HepG2 (cell line): ENCODE measurements at regions of chr22 and their contacts with region 1.

Region 1: DNA sequence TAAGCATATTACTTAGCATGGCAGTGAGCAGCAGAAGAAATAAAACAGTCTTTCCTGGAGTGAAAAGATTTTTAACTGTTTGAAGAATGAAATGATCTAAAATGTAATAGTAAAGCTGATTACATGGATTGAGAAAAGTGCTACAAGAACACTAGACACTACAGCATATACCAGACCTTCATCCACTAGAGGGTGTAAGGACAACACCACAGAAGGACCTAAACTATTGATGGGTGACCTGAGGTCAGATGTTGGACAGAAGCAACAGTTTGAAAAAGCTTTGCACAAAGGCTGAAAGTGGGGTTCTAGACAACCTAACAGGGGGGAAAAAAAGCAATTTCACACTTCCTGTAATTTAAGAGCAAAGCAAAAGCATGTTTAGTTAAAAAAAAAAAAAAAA is 97.7 kb downstream of the RBFOX2 start:
- DNase-seq: peak; percentile 78
- ATAC-seq: peak; percentile 90
- H3K4me3 ChIP-seq: no peak overlapping the region
- H3K27ac ChIP-seq: no peak overlapping the region
- H3K4me1 ChIP-seq: no peaks in the 10 kb centered on the region
- H3K27me3 ChIP-seq: no peaks in the 10 kb centered on the region
- CTCF ChIP-seq: peak; percentile 85
- EP300 ChIP-seq: no peak
- POLR2A ChIP-seq: no peak
- RAD21 ChIP-seq: peak; percentile 73; the same call in 1 of the 2 replicates

Region 2: GRCh38 chr22:35678836-35679235 is 252.1 kb before region 1 on chr22:
- CTCF ChIA-PET with region 1: no interaction called
- POLR2A ChIA-PET with region 1: no interaction called
- in situ Hi-C with region 1: no loop called
- intact Hi-C with region 1: no loop called
- DNase-seq: no peak
- ATAC-seq: no peak
- H3K4me3 ChIP-seq: no peak overlapping the region
- H3K27ac ChIP-seq: no peak overlapping the region
- H3K4me1 ChIP-seq: peaks cover 6% of the 10 kb centered on the region; the same call in 1 of the 2 replicates
- H3K27me3 ChIP-seq: no peaks in the 10 kb centered on the region
- CTCF ChIP-seq: no peak
- EP300 ChIP-seq: no peak
- POLR2A ChIP-seq: no peak
- RAD21 ChIP-seq: no peak

Region 3: DNA sequence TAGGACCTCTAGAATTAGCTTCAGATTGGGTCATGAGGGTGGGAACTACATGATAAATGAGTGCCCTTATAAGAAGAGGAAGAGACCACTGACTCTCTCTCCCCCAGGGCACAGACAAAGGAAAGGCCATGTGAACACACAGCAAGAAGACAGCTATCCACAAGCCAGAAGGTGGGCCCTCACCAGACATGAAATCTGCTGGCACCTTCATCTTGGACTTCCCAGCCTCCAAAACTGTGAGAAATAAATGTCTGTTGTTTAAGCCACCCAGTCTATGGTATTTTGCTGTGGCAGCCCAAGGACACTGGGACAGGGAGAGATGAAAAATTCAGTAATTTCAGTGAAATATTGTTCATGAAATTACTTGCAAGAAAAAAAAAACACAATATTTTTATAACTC is 91.8 kb after region 1 on chr22:
- CTCF ChIA-PET with region 1: no interaction called
- POLR2A ChIA-PET with region 1: no interaction called
- in situ Hi-C with region 1: no loop called
- intact Hi-C with region 1: loop called (anchors 1 kb)
- DNase-seq: no peak
- ATAC-seq: no peak
- H3K4me3 ChIP-seq: no peak overlapping the region
- H3K27ac ChIP-seq: no peak overlapping the region
- H3K4me1 ChIP-seq: peaks cover 33% of the 10 kb centered on the region
- H3K27me3 ChIP-seq: no peaks in the 10 kb centered on the region; a peak in 1 of 5 replicates
- CTCF ChIP-seq: no peak
- EP300 ChIP-seq: no peak
- POLR2A ChIP-seq: no peak
- RAD21 ChIP-seq: no peak

Region 4: DNA sequence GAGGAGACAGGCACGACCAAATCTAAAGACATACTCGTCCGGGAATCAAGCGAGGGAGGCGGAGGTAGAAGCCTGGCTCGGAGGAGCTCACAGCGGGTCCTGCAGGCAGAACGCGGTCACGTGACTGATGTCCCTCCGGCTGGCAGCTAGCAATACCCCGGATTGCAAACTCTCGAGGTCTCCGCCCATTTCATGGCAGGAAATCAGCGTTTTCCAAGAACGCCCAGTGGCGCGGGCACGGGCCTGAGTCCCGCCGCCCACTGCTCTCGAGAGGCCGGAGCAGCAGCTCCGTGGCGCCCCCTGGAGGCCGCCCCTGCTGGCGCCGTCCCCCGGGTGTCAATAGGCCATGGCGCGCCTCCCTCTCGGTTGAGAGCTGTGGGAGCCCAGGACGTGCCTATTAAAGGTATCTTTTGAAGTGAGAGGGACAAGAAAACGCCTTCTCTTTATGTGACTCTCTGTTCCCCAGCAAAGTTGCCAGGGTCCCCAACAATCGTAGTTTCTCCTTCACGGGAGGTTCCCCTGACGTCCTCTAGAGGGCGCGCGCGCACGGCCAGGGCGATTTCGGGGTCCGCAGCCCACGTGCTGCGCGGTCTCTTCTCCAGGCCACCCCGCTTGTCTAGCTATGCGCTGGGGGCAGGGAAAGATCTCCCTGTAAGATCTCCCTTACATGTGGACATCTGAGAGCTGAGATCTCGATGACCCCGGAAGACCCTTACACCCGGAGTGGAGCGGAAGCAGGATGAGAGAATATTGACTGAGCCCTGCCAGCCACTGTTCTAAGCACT is 135.0 kb after region 1 on chr22:
- CTCF ChIA-PET with region 1: interaction called, 32 read pairs
- POLR2A ChIA-PET with region 1: interaction called, 8 read pairs
- in situ Hi-C with region 1: loop called (anchors 5 kb)
- intact Hi-C with region 1: loop called (anchors 1 kb)
- DNase-seq: peak; percentile 85
- ATAC-seq: peak; percentile 90
- H3K4me3 ChIP-seq: peak overlapping the region; percentile 46 to 75 (median 61)
- H3K27ac ChIP-seq: peak overlapping the region; percentile 48
- H3K4me1 ChIP-seq: peaks cover 15% of the 10 kb centered on the region
- H3K27me3 ChIP-seq: no peaks in the 10 kb centered on the region
- CTCF ChIP-seq: peak; percentile 91
- EP300 ChIP-seq: no peak
- POLR2A ChIP-seq: peak; percentile 54 to 68
- RAD21 ChIP-seq: peak; percentile 90